Activated CD8-positive, alpha-beta T cell treated with anti-CD3 and anti-CD28 coated beads for 36 hours (primary cell): ENCODE measurements at regions of chr19 and their contacts with region 1.

Region 1: DNA sequence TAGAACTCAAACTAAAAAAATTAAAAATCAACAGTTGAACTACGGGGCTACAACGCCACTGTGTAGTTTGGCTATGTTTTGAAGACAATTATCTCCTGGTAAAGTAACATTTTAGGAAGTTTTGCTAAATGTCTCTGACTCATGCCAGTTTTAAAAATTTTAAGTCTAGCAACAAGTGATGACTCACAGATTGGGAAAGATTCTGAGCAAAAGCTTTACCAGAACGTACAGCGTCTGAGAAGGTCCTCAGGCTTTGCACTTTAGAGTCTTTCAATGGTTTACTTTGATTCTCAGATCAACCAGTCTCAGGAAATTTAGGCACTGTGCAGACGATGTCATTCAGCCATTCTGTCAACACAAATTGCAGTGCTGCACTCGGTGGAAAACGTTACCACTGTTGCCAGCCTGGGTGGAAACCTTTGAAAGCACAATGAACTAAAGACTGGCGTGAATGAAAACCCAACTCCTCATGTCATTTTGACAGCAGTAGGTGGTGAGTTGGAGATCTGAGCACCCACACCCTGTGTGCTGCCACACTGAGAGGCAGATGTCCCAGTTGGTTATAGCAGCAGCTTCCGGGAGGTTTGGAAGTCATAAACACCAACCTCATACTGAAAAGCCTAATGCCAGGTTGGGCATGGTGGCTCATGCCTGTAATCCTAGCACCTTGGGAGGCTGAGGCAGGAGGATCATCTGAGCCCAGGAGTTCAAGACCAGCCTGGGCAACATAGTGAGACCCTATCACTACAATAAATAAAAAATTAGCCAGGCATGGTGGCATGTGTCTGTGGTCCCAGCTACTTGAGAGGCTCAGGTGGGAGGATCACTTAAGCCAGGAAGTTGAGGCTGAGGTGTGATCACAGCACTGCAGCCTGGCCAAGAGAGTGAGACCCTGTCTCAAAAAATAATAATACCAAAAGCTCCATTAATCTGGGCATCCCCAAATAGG is 6.3 kb upstream of the WTIP start:
- DNase-seq: peak; percentile 28
- ATAC-seq: peak; percentile 79
- H3K4me3 Mint-ChIP-seq: no peak overlapping the region
- H3K27ac Mint-ChIP-seq: peak overlapping the region; percentile 61
- H3K4me1 Mint-ChIP-seq: peaks cover 9% of the 10 kb centered on the region
- H3K27me3 Mint-ChIP-seq: peaks cover 4% of the 10 kb centered on the region
- CTCF ChIP-seq: no peak

Region 2: GRCh38 chr19:34461375-34462100 is 13.8 kb before region 1 on chr19:
- CTCF ChIA-PET with region 1: interaction called, 12 read pairs
- POLR2A ChIA-PET with region 1: interaction called, 6 read pairs
- intact Hi-C with region 1: no loop called
- DNase-seq: no peak
- ATAC-seq: no peak
- H3K4me3 Mint-ChIP-seq: no peak overlapping the region
- H3K27ac Mint-ChIP-seq: peak overlapping the region; percentile 21
- H3K4me1 Mint-ChIP-seq: peaks cover 1% of the 10 kb centered on the region
- H3K27me3 Mint-ChIP-seq: no peaks in the 10 kb centered on the region
- CTCF ChIP-seq: no peak

Region 3: GRCh38 chr19:34499981-34500495 is 24.7 kb after region 1 on chr19:
- CTCF ChIA-PET with region 1: interaction called, 8 read pairs
- POLR2A ChIA-PET with region 1: interaction called, 10 read pairs
- intact Hi-C with region 1: no loop called
- DNase-seq: peak; percentile 56
- ATAC-seq: peak; percentile 54
- H3K4me3 Mint-ChIP-seq: no peak overlapping the region
- H3K27ac Mint-ChIP-seq: no peak overlapping the region
- H3K4me1 Mint-ChIP-seq: peaks cover 7% of the 10 kb centered on the region
- H3K27me3 Mint-ChIP-seq: peaks cover 5% of the 10 kb centered on the region
- CTCF ChIP-seq: no peak

Region 4: GRCh38 chr19:34540811-34541557 is 65.7 kb after region 1 on chr19:
- CTCF ChIA-PET with region 1: no interaction called
- POLR2A ChIA-PET with region 1: no interaction called
- intact Hi-C with region 1: no loop called
- DNase-seq: no peak
- ATAC-seq: no peak
- H3K4me3 Mint-ChIP-seq: no peak overlapping the region
- H3K27ac Mint-ChIP-seq: no peak overlapping the region
- H3K4me1 Mint-ChIP-seq: no peaks in the 10 kb centered on the region
- H3K27me3 Mint-ChIP-seq: peaks cover 19% of the 10 kb centered on the region
- CTCF ChIP-seq: no peak

Region 5: GRCh38 chr19:34556488-34556887 is 81.2 kb after region 1 on chr19:
- CTCF ChIA-PET with region 1: no interaction called
- POLR2A ChIA-PET with region 1: no interaction called
- intact Hi-C with region 1: no loop called
- DNase-seq: peak; percentile 59
- ATAC-seq: peak; percentile 64
- H3K4me3 Mint-ChIP-seq: no peak overlapping the region
- H3K27ac Mint-ChIP-seq: no peak overlapping the region
- H3K4me1 Mint-ChIP-seq: no peaks in the 10 kb centered on the region
- H3K27me3 Mint-ChIP-seq: peaks cover 18% of the 10 kb centered on the region
- CTCF ChIP-seq: peak; percentile 51